H1 (cell line): ENCODE measurements at regions of chr10 and their contacts with region 1.

Region 1: DNA sequence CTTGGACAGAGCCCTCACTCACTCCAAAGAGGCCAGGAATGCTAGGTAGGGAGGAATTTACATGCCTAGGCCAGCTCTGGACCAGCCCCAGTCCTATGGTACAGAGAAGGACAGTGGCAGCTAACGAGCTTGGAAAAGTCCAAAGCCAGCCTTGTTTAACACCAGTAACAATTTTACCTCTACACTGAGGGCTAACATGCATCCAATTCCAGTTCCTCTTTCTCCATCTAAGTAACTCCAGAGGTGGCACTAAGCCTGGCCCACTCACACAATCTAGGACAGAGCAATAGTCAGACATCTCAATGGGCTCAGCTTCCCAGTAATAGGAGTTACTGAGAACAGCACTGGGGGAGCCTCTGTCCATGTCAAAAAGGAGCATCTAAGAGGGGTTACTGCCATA is 5.7 kb upstream of the LCOR start:
- DNase-seq: no peak
- H3K4me3 ChIP-seq: no peak overlapping the region
- H3K27ac ChIP-seq: no peak overlapping the region
- H3K4me1 ChIP-seq: no peaks in the 10 kb centered on the region; a peak in 2 of 7 replicates
- H3K27me3 ChIP-seq: no peaks in the 10 kb centered on the region; a peak in 1 of 7 replicates
- CTCF ChIP-seq: no peak
- EP300 ChIP-seq: no peak
- POLR2A ChIP-seq: no peak
- RAD21 ChIP-seq: no peak

Region 2: GRCh38 chr10:96789571-96790108 is 36.8 kb before region 1 on chr10:
- CTCF ChIA-PET with region 1: interaction called, 11 read pairs
- POLR2A ChIA-PET with region 1: no interaction called
- DNase-seq: peak in 1 of 2 experiments; percentile 78
- H3K4me3 ChIP-seq: no peak overlapping the region
- H3K27ac ChIP-seq: no peak overlapping the region
- H3K4me1 ChIP-seq: no peaks in the 10 kb centered on the region
- H3K27me3 ChIP-seq: no peaks in the 10 kb centered on the region
- CTCF ChIP-seq: peak; percentile 49 to 85 (median 72); a peak in 3 of 4 replicates
- EP300 ChIP-seq: no peak
- POLR2A ChIP-seq: no peak
- RAD21 ChIP-seq: peak; percentile 62